ENCODE measurements at regions of chr9 and their contacts with region 1.

Region 1: GRCh38 chr9:133742849-133743444 is 4.8 kb upstream of the SARDH start:
- DNase-seq: peak; percentile 40 to 88
- H3K4me3 ChIP-seq: no peak overlapping the region
- H3K27ac ChIP-seq: no peak overlapping the region
- H3K4me1 ChIP-seq: no peaks in the 10 kb centered on the region
- H3K27me3 ChIP-seq: peaks cover 42% of the 10 kb centered on the region
- CTCF ChIP-seq: peak; percentile 99

Region 2: GRCh38 chr9:133509179-133510079 is 233.5 kb before region 1 on chr9:
- CTCF ChIA-PET with region 1: no interaction called
- POLR2A ChIA-PET with region 1: no interaction called
- intact Hi-C with region 1: loop called (anchors 10 kb)
- DNase-seq: peak in 1 of 2 experiments; percentile 55
- H3K4me3 ChIP-seq: peak overlapping the region; percentile 13; the same call in 1 of the 2 replicates
- H3K27ac ChIP-seq: no peak overlapping the region
- H3K4me1 ChIP-seq: peaks cover 22% of the 10 kb centered on the region
- H3K27me3 ChIP-seq: peaks cover 33% of the 10 kb centered on the region
- CTCF ChIP-seq: no peak

Region 3: DNA sequence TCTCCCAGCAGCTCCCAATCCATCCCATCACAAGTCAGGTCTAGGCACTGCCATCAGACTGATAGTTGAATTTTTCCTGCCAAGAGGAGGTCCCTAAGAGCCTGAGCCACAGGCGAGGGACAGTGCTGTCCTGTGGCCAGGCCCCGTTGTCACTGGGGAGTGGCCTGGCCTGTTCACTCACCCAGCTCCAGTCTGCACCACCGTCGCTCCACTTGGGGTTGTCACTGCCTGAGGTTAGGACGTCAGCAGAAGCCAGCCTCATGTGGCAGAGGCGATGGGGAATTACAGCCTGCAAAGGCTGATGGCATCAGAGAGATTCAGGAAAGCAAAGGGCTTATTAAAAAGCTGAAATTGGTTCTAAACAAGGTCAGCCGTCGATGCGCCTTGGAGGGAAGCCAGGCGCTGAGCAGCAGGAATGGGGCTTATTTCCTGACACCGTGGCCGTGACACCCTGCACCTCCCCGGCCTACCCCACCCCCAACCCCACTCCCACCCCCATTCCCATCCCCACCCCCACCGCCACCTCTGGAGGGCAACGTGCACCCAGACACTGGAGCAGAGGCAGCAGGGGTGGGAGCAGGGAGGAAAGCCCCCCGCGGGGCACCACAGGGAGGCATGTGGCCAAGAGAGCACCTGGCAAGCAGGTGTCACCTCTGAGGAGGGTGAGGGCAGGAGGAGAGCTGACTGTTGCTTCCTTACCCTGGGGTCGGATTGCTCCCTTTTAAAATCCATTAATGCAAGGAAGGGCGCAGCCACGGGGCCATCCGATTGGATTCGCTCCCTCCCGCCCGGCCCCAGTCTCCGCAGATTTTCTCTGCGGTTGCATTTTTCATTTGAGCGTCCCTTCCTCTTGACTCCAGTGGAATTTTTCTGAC is 109.9 kb before region 1 on chr9:
- CTCF ChIA-PET with region 1: no interaction called
- POLR2A ChIA-PET with region 1: interaction called, 13 read pairs
- intact Hi-C with region 1: no loop called
- DNase-seq: no peak
- H3K4me3 ChIP-seq: no peak overlapping the region
- H3K27ac ChIP-seq: no peak overlapping the region
- H3K4me1 ChIP-seq: no peaks in the 10 kb centered on the region
- H3K27me3 ChIP-seq: peaks cover 96% of the 10 kb centered on the region
- CTCF ChIP-seq: no peak

Region 4: DNA sequence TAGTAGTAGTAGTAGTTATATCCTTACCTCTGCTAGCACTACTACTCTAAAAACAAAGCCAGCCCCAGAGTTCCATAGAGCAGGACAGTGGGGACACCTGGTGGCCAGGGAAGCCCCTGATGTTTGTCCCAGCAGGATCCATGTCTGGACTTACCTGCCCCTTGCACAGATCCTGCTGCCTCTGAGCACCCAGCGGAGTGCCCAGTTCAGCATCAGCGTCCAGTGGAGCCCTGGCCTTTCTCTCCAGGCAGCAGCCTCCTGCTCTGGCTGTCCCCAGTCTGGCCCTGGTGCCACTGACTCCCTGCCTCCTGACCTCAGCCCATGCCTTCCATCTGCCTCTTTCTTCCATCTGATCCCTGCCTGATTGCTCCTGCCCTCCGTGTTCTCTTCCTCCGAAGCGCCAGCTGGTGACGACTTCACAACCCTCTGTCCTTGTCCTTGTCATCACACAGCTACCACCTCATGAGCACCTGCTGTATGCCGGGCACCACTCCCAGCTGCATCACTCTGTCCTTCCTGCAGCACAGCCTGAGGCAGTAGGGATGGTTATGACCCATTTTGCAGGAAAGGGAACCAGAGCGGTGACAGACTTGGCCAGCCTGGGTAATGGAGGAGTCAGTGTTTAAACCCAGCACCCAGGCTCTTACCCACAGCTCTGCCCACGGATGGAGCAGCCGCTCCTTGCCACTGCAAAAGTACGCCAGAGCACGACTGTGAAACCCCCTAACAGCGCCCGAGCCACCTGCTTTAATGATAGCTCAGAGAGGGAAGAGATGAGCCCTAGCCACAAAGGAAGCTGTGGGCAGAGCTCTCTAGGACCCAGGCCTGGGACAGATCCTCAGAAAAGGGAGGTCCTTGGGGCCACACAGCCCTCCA is 16.3 kb before region 1 on chr9:
- CTCF ChIA-PET with region 1: no interaction called
- POLR2A ChIA-PET with region 1: no interaction called
- intact Hi-C with region 1: no loop called
- DNase-seq: peak; percentile 44 to 78
- H3K4me3 ChIP-seq: no peak overlapping the region
- H3K27ac ChIP-seq: no peak overlapping the region
- H3K4me1 ChIP-seq: no peaks in the 10 kb centered on the region
- H3K27me3 ChIP-seq: peaks cover 96% of the 10 kb centered on the region
- CTCF ChIP-seq: peak; percentile 66

Region 5: DNA sequence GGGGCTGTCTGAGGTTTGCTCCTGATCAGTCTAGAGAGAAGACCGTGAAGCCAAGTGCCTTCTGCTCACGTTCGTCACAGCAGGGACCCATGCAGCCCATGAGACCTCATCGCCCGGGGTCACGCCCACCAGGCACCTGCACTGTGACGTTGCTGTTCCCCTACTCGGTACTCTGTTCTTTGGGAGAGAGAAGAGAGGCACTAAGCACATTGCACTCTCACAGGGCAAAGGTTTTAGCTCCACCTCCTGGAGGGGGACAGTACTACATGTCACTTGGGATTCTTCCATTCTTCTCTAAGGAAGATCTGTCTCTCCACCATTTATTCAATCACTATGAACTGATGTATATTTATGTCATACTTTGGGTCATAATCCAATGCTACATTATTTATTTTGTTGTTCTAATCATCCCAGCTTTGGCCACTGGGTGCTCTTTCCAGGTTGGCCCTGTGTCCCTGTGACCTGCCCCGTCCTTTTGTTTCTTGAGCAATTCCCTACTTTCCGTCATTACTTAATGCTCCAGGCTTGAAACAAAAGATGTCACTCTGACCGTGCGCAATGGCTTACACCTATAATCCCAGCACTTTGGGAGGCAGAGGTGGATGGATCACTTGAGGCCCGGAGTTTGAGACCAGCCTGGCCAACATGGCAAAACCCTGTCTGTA is 356.3 kb after region 1 on chr9:
- CTCF ChIA-PET with region 1: no interaction called
- POLR2A ChIA-PET with region 1: no interaction called
- intact Hi-C with region 1: loop called (anchors 5 kb)
- DNase-seq: peak; percentile 61 to 66
- H3K4me3 ChIP-seq: no peak overlapping the region
- H3K27ac ChIP-seq: no peak overlapping the region
- H3K4me1 ChIP-seq: no peaks in the 10 kb centered on the region
- H3K27me3 ChIP-seq: peaks cover 79% of the 10 kb centered on the region
- CTCF ChIP-seq: peak; percentile 91

Region 6: DNA sequence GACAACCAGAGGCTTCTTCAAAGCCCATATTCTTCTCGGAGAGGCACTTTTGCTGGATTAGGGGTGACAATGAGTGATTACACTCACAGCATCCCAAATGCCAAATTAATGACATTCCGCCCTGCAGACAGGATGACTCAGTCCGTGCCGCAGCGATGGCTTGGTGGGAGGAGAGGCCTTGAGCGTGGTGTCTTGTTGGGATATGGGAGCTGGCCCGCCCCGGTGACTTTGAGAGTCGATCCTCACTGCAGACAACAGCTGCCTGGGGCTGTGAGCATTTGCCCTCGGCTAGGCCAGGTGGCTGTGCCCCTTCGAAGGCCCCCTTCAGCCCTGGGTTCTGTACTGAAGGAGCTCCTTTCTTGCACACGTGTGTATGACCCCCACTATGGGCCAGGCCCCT is 1374.3 kb after region 1 on chr9:
- CTCF ChIA-PET with region 1: no interaction called
- POLR2A ChIA-PET with region 1: no interaction called
- intact Hi-C with region 1: no loop called
- DNase-seq: no peak
- H3K4me3 ChIP-seq: no peak overlapping the region
- H3K27ac ChIP-seq: no peak overlapping the region
- H3K4me1 ChIP-seq: no peaks in the 10 kb centered on the region
- H3K27me3 ChIP-seq: peaks cover 91% of the 10 kb centered on the region
- CTCF ChIP-seq: no peak

Measured in PC-9 (cell line).